Activated CD4-positive, alpha-beta T cell treated with anti-CD3 and anti-CD28 coated beads, Interleukin-2, amount 10 ng/mL, durations not matched to agents 24 days and 14 days (primary cell): ENCODE measurements at regions of chr4 and their contacts with region 1.

Region 1: GRCh38 chr4:152454398-152455011 is 81.4 kb downstream of the FBXW7 start:
- DNase-seq: no peak
- H3K4me3 Mint-ChIP-seq: no peak overlapping the region
- H3K27ac Mint-ChIP-seq: no peak overlapping the region
- H3K4me1 Mint-ChIP-seq: peaks cover 29% of the 10 kb centered on the region
- H3K27me3 Mint-ChIP-seq: no peaks in the 10 kb centered on the region

Region 2: GRCh38 chr4:152500800-152501434 is 46.4 kb after region 1 on chr4:
- intact Hi-C with region 1: loop called (anchors 5 kb)
- DNase-seq: peak; percentile 92
- H3K4me3 Mint-ChIP-seq: no peak overlapping the region
- H3K27ac Mint-ChIP-seq: no peak overlapping the region
- H3K4me1 Mint-ChIP-seq: peaks cover 26% of the 10 kb centered on the region
- H3K27me3 Mint-ChIP-seq: no peaks in the 10 kb centered on the region

Region 3: GRCh38 chr4:152559641-152560040 is 105.1 kb after region 1 on chr4:
- intact Hi-C with region 1: loop called (anchors 2 kb)
- DNase-seq: no peak
- H3K4me3 Mint-ChIP-seq: no peak overlapping the region
- H3K27ac Mint-ChIP-seq: no peak overlapping the region
- H3K4me1 Mint-ChIP-seq: peaks cover 19% of the 10 kb centered on the region
- H3K27me3 Mint-ChIP-seq: no peaks in the 10 kb centered on the region

Region 4: DNA sequence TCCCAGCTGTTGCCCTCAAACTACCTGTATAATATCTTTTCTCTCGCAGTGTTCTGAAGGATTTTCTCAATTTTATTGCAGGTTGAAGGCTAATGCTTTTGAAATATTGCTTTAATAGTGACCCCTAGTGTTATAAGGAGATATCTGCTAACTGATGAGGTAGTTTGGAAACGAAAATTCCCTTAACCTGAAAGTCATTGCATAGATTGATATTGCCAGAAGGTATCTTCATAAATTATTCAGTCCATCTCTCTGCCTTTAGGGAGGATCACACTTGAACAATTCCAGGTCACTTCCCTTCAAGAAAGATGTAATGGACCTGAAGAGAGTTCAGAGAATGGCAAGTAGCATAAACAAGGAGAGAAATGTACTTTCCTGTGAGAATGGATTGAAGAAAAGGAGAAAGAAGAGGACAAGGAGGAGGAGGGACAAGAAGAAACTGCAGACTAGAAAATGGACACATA is 280.9 kb after region 1 on chr4:
- intact Hi-C with region 1: loop called (anchors 2 kb)
- DNase-seq: no peak
- H3K4me3 Mint-ChIP-seq: no peak overlapping the region
- H3K27ac Mint-ChIP-seq: no peak overlapping the region
- H3K4me1 Mint-ChIP-seq: peaks cover 2% of the 10 kb centered on the region
- H3K27me3 Mint-ChIP-seq: peaks cover 8% of the 10 kb centered on the region

Region 5: DNA sequence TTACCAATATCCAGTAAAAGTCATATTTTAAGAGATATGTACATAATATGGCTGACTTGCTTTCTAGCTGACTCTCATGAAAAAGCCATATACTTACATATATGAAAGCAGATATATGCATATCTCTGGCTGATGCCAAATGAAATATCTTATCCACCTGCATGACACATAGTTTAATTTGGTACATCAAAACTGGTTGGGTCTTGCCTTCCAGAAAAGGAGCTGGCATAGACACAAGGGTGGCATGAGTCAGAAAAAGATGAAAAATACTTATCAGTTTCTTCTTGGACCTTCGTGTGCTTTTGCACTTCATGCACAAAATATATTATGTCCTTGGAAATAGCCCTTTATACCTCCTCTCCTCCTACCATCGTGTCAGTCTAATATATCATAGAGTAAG is 292.9 kb after region 1 on chr4:
- intact Hi-C with region 1: no loop called
- DNase-seq: no peak
- H3K4me3 Mint-ChIP-seq: no peak overlapping the region
- H3K27ac Mint-ChIP-seq: no peak overlapping the region
- H3K4me1 Mint-ChIP-seq: no peaks in the 10 kb centered on the region
- H3K27me3 Mint-ChIP-seq: peaks cover 6% of the 10 kb centered on the region